Mammary epithelial cell (primary cell): ENCODE measurements at regions of chrX and their contacts with region 1.

Region 1: GRCh38 chrX:69027181-69028005 is 137.9 kb downstream of the PJA1 start:
- DNase-seq: peak; percentile 97
- H3K4me3 ChIP-seq: no peak overlapping the region
- H3K27ac ChIP-seq: peak overlapping the region; percentile 96
- H3K4me1 ChIP-seq: peaks cover 53% of the 10 kb centered on the region
- H3K27me3 ChIP-seq: no peaks in the 10 kb centered on the region
- CTCF ChIP-seq: no peak

Region 2: DNA sequence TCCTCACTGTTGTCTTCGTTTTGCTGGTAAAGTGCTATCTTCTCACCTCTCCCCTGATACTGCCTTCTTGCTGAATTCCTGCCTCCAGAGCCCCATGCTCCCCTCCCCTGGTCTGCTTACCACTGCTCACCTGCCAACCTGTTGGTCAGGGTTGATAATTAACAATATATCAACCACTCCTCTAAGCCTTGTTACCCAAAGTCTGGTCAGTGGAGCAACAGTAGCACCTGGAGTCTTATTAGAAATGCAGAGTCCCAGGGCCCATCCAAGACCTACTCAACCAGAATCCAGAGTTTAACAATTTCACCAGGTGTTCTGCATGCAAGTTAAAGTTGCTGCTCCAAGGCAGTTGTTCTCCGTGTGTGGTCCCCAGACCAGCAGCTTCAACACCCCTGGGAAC is 143.6 kb before region 1 on chrX:
- CTCF ChIA-PET with region 1: no interaction called
- dilution Hi-C with region 1: no loop called
- in situ Hi-C with region 1: no loop called
- intact Hi-C with region 1: no loop called
- DNase-seq: no peak
- H3K4me3 ChIP-seq: no peak overlapping the region
- H3K27ac ChIP-seq: no peak overlapping the region
- H3K4me1 ChIP-seq: peaks cover 9% of the 10 kb centered on the region
- H3K27me3 ChIP-seq: no peaks in the 10 kb centered on the region
- CTCF ChIP-seq: no peak

Region 3: DNA sequence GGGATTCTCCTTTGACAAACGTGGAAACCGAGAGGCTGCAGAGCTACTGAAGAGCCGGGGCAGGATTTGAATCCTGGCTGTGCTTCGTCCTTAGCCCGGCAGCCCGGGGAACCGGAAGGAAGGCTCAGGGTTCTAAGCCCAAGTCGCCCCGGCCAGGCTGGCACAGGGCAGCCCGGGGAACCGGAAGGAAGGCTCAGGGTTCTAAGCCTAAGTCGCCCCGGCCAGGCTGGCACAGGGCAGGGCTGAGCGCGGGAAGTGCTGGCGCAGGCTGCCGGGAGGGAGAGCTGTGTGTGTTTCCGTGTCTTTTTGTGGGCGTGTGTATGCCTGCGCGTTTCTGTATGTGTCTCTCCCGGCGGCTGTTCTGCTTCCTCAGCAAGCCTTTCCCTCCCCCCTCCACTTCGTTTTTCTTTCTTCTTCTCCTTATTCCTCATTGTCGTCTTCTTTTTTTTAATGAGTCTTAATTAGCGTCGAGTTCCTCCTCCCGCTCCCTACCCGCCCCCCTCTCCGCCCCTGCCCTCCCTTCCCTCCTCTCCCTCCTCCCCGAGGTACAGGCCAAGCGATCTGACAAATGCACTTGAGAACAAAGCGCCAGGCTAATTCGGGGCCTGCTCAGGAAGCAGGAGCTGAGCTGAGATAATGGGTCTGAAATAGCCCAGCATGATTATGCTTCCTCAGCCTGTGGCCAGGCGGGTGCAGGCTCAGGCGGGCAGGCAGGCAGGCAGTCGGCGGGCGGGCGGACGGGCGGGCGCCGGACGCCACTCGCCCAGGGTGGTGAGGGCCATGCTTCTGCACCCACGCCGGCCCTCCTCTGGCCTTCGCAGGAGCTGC is 132.7 kb before region 1 on chrX:
- CTCF ChIA-PET with region 1: no interaction called
- dilution Hi-C with region 1: no loop called
- in situ Hi-C with region 1: no loop called
- intact Hi-C with region 1: loop called (anchors 1 kb)
- DNase-seq: peak; percentile 33
- H3K4me3 ChIP-seq: no peak overlapping the region
- H3K27ac ChIP-seq: peak overlapping the region; percentile 37
- H3K4me1 ChIP-seq: peaks cover 18% of the 10 kb centered on the region
- H3K27me3 ChIP-seq: no peaks in the 10 kb centered on the region
- CTCF ChIP-seq: no peak

Region 4: GRCh38 chrX:68978258-68979054 is 48.9 kb before region 1 on chrX:
- CTCF ChIA-PET with region 1: interaction called, 27 read pairs
- dilution Hi-C with region 1: no loop called
- in situ Hi-C with region 1: no loop called
- intact Hi-C with region 1: no loop called
- DNase-seq: no peak
- H3K4me3 ChIP-seq: no peak overlapping the region
- H3K27ac ChIP-seq: no peak overlapping the region
- H3K4me1 ChIP-seq: no peaks in the 10 kb centered on the region
- H3K27me3 ChIP-seq: no peaks in the 10 kb centered on the region
- CTCF ChIP-seq: no peak

Region 5: GRCh38 chrX:69060631-69061408 is 33.4 kb after region 1 on chrX:
- CTCF ChIA-PET with region 1: no interaction called
- dilution Hi-C with region 1: no loop called
- in situ Hi-C with region 1: no loop called
- intact Hi-C with region 1: loop called (anchors 1 kb)
- DNase-seq: peak; percentile 36
- H3K4me3 ChIP-seq: no peak overlapping the region
- H3K27ac ChIP-seq: no peak overlapping the region
- H3K4me1 ChIP-seq: no peaks in the 10 kb centered on the region
- H3K27me3 ChIP-seq: no peaks in the 10 kb centered on the region
- CTCF ChIP-seq: peak in 1 of 2 donors; percentile 48

Region 6: DNA sequence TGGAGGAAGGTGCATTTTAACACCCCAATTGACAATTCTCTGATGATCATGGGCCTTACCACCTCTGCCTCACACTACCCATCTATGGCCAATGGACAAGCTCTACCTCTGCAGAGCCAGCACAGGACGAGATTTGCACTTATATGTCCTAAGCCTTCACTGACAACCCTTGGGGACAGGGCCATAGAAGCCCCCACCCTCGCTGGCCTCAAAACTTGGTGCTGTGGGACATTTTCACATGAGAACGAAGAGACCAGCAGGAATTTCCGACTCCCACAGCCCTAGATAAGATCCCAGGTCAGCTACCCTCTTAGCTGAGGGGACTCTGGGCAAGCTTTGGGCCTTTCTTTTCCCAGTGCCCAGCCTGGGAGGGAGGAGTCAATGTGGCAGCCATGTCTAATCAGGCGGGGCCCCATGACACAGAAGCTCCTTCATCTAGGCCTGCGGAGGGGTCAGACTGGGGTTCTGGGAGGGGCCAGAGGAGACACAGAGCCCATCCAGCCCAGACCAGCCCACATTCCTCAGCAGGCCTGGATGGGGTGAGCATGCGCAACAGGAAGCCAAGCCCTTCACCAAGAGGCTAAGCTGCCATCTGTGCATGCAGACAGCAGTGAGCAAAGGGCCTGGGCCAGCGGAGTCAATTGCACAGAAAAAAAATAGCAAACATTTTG is 125.8 kb after region 1 on chrX:
- CTCF ChIA-PET with region 1: no interaction called
- dilution Hi-C with region 1: no loop called
- in situ Hi-C with region 1: no loop called
- intact Hi-C with region 1: loop called (anchors 2 kb)
- DNase-seq: no peak
- H3K4me3 ChIP-seq: no peak overlapping the region
- H3K27ac ChIP-seq: no peak overlapping the region
- H3K4me1 ChIP-seq: peaks cover 21% of the 10 kb centered on the region
- H3K27me3 ChIP-seq: no peaks in the 10 kb centered on the region
- CTCF ChIP-seq: no peak